PC-3 (cell line): ENCODE measurements at regions of chrX and their contacts with region 1.

Region 1: DNA sequence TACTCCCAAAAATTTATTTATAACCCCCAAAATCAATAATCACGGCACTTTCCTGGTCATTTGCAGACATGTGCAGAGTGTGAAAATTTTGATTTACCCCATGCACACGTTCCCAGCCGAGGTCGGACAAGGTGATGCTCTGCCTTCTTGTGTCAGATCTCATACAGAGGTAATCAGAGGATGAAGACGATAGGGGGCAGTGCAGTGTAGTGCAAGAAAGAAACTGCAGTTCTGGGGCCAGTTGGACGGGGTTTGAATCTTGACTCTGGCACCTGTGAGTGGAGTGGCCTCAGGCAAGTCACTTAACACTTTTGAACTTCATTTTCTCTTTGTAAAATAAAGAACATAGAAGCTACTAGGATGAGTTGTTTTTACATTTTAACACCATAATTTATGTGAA is 88.4 kb downstream of the FRMPD3 start:
- DNase-seq: peak; percentile 68
- ATAC-seq: peak; percentile 76
- H3K4me3 ChIP-seq: no peak overlapping the region
- H3K27ac ChIP-seq: no peak overlapping the region
- H3K4me1 ChIP-seq: no peaks in the 10 kb centered on the region
- H3K27me3 ChIP-seq: no peaks in the 10 kb centered on the region
- CTCF ChIP-seq: peak; percentile 77

Region 2: DNA sequence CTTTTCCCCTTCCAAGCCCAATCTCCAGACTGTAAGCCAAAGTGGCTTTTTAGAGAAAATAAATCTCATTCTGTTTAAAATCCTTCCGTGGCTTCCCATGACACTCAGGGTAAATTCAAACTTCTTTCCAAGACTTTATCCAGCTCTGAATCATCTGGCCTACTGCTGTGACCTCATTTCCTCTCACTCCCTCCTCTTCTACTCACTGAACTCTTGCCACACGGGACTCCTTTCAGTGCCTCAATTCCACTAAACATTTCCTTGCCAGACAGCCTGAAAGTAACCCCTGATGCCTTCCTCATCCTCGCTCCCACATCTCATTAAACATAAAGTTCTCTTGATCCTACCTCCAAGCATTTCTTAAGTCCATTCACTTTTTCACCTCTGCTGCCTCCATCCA is 839.1 kb before region 1 on chrX:
- CTCF ChIA-PET with region 1: interaction called, 12 read pairs
- POLR2A ChIA-PET with region 1: no interaction called
- intact Hi-C with region 1: no loop called
- DNase-seq: no peak
- ATAC-seq: no peak
- H3K4me3 ChIP-seq: no peak overlapping the region
- H3K27ac ChIP-seq: no peak overlapping the region
- H3K4me1 ChIP-seq: no peaks in the 10 kb centered on the region
- H3K27me3 ChIP-seq: peaks cover 7% of the 10 kb centered on the region; the same call in 1 of the 2 replicates
- CTCF ChIP-seq: no peak

Region 3: GRCh38 chrX:107522901-107523300 is 14.9 kb before region 1 on chrX:
- CTCF ChIA-PET with region 1: interaction called, 13 read pairs
- POLR2A ChIA-PET with region 1: no interaction called
- intact Hi-C with region 1: no loop called
- DNase-seq: no peak
- ATAC-seq: no peak
- H3K4me3 ChIP-seq: no peak overlapping the region
- H3K27ac ChIP-seq: no peak overlapping the region
- H3K4me1 ChIP-seq: no peaks in the 10 kb centered on the region
- H3K27me3 ChIP-seq: no peaks in the 10 kb centered on the region
- CTCF ChIP-seq: no peak

Region 4: GRCh38 chrX:107654872-107655761 is 117.3 kb after region 1 on chrX:
- CTCF ChIA-PET with region 1: no interaction called
- POLR2A ChIA-PET with region 1: no interaction called
- intact Hi-C with region 1: loop called (anchors 10 kb)
- DNase-seq: peak; percentile 86
- ATAC-seq: peak; percentile 84
- H3K4me3 ChIP-seq: peak overlapping the region; percentile 34
- H3K27ac ChIP-seq: peak overlapping the region; percentile 89
- H3K4me1 ChIP-seq: peaks cover 19% of the 10 kb centered on the region
- H3K27me3 ChIP-seq: no peaks in the 10 kb centered on the region
- CTCF ChIP-seq: peak; percentile 88

Region 5: DNA sequence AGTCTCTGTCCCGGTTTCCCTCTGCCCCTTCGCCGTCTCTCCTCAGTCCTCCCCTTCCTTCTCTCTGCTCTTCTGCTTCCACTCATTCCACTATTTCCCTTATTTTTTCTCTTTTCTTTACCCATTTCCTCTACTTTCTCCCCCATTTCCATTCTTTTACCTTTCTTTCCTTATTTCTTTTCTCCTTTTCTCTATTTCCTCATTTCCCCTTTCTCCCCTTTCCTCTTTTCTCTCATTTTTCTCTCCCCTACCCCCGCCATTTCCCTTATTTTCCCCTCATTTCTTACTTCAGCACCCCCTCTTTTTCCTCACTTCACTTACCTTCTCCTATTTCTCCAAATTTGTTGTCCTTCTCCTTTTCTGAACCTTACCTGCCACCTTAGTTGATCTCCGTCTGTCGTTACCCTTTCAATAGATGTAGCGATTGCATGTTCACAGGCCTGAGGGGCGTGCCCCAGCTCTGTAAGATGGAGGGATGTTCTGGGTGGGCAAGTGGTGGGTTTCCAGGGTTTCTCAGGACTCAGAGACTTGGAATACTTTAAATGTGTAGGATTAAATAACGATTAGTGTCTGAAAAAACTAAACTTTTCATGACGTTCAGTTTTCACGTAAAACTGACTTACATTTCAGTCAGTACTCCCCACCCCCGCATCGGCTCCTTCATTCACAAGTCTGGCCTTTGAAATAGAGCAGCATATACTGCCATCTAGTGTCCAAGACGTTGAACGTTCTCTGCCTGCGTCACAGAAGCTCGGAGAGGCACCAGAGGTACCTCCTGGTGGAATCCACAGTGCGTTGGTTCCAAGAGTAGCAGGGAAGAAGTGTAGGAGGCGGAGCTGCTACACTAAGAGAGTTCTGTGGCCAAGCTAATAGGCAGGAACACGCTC is 239.1 kb after region 1 on chrX:
- CTCF ChIA-PET with region 1: no interaction called
- POLR2A ChIA-PET with region 1: no interaction called
- intact Hi-C with region 1: loop called (anchors 5 kb)
- DNase-seq: peak; percentile 94
- ATAC-seq: peak; percentile 74
- H3K4me3 ChIP-seq: peak overlapping the region; percentile 77
- H3K27ac ChIP-seq: no peak overlapping the region
- H3K4me1 ChIP-seq: peaks cover 10% of the 10 kb centered on the region
- H3K27me3 ChIP-seq: no peaks in the 10 kb centered on the region
- CTCF ChIP-seq: peak; percentile 77

Region 6: GRCh38 chrX:107851215-107851614 is 313.4 kb after region 1 on chrX:
- CTCF ChIA-PET with region 1: no interaction called
- POLR2A ChIA-PET with region 1: no interaction called
- intact Hi-C with region 1: no loop called
- DNase-seq: no peak
- ATAC-seq: no peak
- H3K4me3 ChIP-seq: no peak overlapping the region
- H3K27ac ChIP-seq: no peak overlapping the region
- H3K4me1 ChIP-seq: peaks cover 9% of the 10 kb centered on the region
- H3K27me3 ChIP-seq: no peaks in the 10 kb centered on the region
- CTCF ChIP-seq: no peak